ENCODE measurements at regions of chr11 and their contacts with region 1.

Region 1: GRCh38 chr11:69670158-69670845 is 4.9 kb downstream of the LTO1 start:
- DNase-seq: peak; percentile 70
- H3K4me3 Mint-ChIP-seq: no peak overlapping the region
- H3K27ac Mint-ChIP-seq: peak overlapping the region; percentile 16
- H3K4me1 Mint-ChIP-seq: peaks cover 24% of the 10 kb centered on the region
- H3K27me3 Mint-ChIP-seq: no peaks in the 10 kb centered on the region

Region 2: GRCh38 chr11:69576069-69576782 is 94.1 kb before region 1 on chr11:
- CTCF ChIA-PET with region 1: no interaction called
- POLR2A ChIA-PET with region 1: no interaction called
- intact Hi-C with region 1: no loop called
- DNase-seq: no peak
- H3K4me3 Mint-ChIP-seq: no peak overlapping the region
- H3K27ac Mint-ChIP-seq: no peak overlapping the region
- H3K4me1 Mint-ChIP-seq: no peaks in the 10 kb centered on the region
- H3K27me3 Mint-ChIP-seq: peaks cover 34% of the 10 kb centered on the region

Region 3: DNA sequence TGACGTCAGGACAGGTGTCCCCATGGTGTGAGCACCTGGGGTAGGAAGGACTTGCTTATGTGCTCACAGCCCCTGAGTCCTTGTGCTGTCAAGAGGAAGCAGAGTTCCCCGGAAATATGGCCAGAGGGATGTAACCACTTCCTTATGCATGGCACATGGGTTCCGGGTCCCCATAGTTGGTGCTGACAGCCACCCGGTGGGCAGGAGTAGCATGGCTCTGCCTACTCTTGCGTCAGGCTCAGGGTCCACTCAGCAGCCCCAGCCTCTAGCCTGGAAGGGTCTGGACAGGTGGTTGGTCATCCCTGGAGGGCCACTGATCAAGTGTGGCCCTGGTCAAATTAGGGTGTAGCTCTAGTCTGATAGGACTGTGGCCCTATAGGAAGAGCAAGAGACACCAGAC is 72.1 kb before region 1 on chr11:
- CTCF ChIA-PET with region 1: no interaction called
- POLR2A ChIA-PET with region 1: no interaction called
- intact Hi-C with region 1: no loop called
- DNase-seq: no peak
- H3K4me3 Mint-ChIP-seq: no peak overlapping the region
- H3K27ac Mint-ChIP-seq: no peak overlapping the region
- H3K4me1 Mint-ChIP-seq: no peaks in the 10 kb centered on the region
- H3K27me3 Mint-ChIP-seq: peaks cover 1% of the 10 kb centered on the region

Region 4: DNA sequence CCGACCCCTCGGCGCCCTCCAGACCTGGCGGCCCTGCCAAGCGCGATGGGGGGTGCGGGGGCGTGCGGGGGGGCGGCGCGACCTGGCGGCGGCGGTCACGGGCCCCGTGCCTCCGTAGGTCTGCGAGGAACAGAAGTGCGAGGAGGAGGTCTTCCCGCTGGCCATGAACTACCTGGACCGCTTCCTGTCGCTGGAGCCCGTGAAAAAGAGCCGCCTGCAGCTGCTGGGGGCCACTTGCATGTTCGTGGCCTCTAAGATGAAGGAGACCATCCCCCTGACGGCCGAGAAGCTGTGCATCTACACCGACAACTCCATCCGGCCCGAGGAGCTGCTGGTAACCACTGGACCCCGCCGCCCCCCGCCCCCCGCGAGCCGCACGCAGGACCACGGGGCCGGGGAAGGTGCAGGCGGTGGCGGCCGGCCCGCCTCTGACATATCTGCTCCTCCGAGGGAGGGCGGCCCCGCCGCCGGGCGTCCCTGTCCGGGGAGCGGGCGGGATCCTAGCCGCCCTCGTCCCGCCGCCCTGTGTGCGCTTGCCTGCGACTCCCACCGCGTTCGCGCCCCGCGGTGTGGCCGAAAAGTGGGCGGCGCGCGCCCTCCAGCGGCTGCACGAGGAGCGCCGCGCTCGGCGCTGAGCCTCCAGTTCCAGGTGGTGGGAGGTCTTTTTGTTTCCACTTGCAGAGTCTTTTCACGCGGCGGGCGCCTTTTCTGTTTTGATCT is 27.2 kb before region 1 on chr11:
- CTCF ChIA-PET with region 1: interaction called, 11 read pairs
- POLR2A ChIA-PET with region 1: no interaction called
- intact Hi-C with region 1: no loop called
- DNase-seq: peak; percentile 81
- H3K4me3 Mint-ChIP-seq: peak overlapping the region; percentile 57
- H3K27ac Mint-ChIP-seq: no peak overlapping the region
- H3K4me1 Mint-ChIP-seq: peaks cover 17% of the 10 kb centered on the region
- H3K27me3 Mint-ChIP-seq: peaks cover 22% of the 10 kb centered on the region

Region 5: GRCh38 chr11:69654569-69655327 is 15.6 kb before region 1 on chr11:
- CTCF ChIA-PET with region 1: interaction called, 11 read pairs
- POLR2A ChIA-PET with region 1: no interaction called
- intact Hi-C with region 1: no loop called
- DNase-seq: no peak
- H3K4me3 Mint-ChIP-seq: no peak overlapping the region
- H3K27ac Mint-ChIP-seq: no peak overlapping the region
- H3K4me1 Mint-ChIP-seq: no peaks in the 10 kb centered on the region
- H3K27me3 Mint-ChIP-seq: no peaks in the 10 kb centered on the region

Region 6: GRCh38 chr11:69680688-69681087 is 10.4 kb after region 1 on chr11:
- CTCF ChIA-PET with region 1: interaction called, 11 read pairs
- POLR2A ChIA-PET with region 1: no interaction called
- intact Hi-C with region 1: no loop called
- DNase-seq: no peak
- H3K4me3 Mint-ChIP-seq: no peak overlapping the region
- H3K27ac Mint-ChIP-seq: no peak overlapping the region
- H3K4me1 Mint-ChIP-seq: peaks cover 2% of the 10 kb centered on the region
- H3K27me3 Mint-ChIP-seq: peaks cover 2% of the 10 kb centered on the region

Region 7: DNA sequence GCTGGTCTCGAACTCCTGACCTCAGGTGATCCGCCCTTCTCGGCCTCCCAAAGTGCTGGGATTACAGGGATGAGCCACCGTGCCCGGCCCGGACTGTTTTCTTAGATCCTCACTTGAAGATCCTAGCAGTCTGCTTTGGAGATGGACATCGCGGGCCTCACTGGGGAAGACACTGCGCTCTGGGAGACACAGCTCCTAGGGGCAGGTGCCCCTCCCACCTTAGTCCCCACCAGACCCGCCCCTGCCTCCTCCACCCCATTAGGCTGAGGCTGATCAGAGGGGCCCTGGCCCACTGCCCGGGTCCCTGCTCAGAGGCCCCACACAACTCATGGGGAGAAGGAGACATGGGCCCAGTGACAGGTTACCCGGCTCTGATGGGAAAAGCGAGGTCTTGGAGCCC is 16.1 kb after region 1 on chr11:
- CTCF ChIA-PET with region 1: interaction called, 11 read pairs
- POLR2A ChIA-PET with region 1: no interaction called
- intact Hi-C with region 1: no loop called
- DNase-seq: no peak
- H3K4me3 Mint-ChIP-seq: no peak overlapping the region
- H3K27ac Mint-ChIP-seq: no peak overlapping the region
- H3K4me1 Mint-ChIP-seq: peaks cover 10% of the 10 kb centered on the region
- H3K27me3 Mint-ChIP-seq: peaks cover 20% of the 10 kb centered on the region

Region 8: GRCh38 chr11:69760319-69760718 is 90.0 kb after region 1 on chr11:
- CTCF ChIA-PET with region 1: no interaction called
- POLR2A ChIA-PET with region 1: no interaction called
- intact Hi-C with region 1: no loop called
- DNase-seq: no peak
- H3K4me3 Mint-ChIP-seq: no peak overlapping the region
- H3K27ac Mint-ChIP-seq: no peak overlapping the region
- H3K4me1 Mint-ChIP-seq: no peaks in the 10 kb centered on the region
- H3K27me3 Mint-ChIP-seq: peaks cover 17% of the 10 kb centered on the region

Region 9: GRCh38 chr11:69775163-69775755 is 105.0 kb after region 1 on chr11 and contains the start of gene FGF4:
- CTCF ChIA-PET with region 1: no interaction called
- POLR2A ChIA-PET with region 1: no interaction called
- intact Hi-C with region 1: no loop called
- DNase-seq: no peak
- H3K4me3 Mint-ChIP-seq: no peak within 1 kb of the TSS
- H3K27ac Mint-ChIP-seq: no peak within 1 kb of the TSS
- H3K4me1 Mint-ChIP-seq: no peaks in the 10 kb centered on the region
- H3K27me3 Mint-ChIP-seq: peaks cover 32% of the 10 kb centered on the region
- total RNA-seq, gene FGF4: not detected

Measured in activated CD4-positive, alpha-beta memory T cell treated with anti-CD3 and anti-CD28 coated beads for 36 hours (primary cell).